ENCODE measurements at regions of chr1 and their contacts with region 1.

Region 1: GRCh38 chr1:246566128-246566812 is at the starts of genes CNST and TFB2M:
- DNase-seq: peak; percentile 89 to 98
- H3K4me3 ChIP-seq: peak within 1 kb of the TSS; percentile 90
- H3K27ac ChIP-seq: peak within 1 kb of the TSS; percentile 69
- H3K4me1 ChIP-seq: peaks cover 19% of the 10 kb centered on the region
- H3K27me3 ChIP-seq: no peaks in the 10 kb centered on the region
- CTCF ChIP-seq: no peak
- total RNA-seq, gene CNST: 9.1 and 13.1 TPM in 2 replicates
- total RNA-seq, gene TFB2M: 16.2 and 17.8 TPM in 2 replicates

Region 2: DNA sequence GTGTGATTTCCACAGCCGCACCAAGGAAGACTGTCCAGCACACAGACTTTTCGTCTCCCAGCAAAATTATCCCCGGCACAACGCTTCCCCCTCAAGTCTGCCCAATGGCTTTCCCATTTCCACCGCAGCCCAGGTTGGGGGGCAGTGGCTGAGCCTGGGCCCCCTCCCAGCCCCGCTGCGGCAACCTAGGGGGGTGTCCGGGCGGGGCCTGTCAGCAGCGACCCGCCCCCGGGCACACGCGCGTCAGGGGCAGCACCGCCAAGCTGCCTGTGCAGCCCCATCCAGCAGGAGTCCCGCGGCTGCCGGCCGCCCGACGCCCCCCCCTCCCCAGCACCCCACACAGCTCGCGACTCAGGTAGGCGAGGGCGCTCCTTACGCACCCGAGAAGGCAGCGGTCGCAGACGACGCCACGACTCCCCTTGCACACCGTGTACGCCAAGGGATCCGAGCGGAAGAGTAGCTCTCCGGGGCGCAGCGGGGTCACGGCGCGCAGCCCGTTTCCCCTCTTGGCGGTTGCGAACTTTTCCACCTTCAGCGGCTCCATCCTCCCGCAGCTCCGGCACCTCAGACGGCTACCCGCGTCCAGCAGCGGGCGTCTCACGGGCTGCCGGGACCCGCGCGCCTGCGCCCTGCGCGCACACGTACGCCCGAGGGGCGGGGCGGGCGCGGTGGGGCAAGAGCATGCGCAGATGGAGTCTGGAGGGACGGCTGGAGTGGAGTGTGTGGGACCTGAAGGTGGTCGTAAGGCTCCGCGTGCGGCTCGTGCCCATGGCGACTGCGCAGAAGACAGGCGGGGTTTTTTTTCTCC is 59.4 kb before region 1 on chr1 and contains the start of gene SMYD3:
- CTCF ChIA-PET with region 1: no interaction called
- POLR2A ChIA-PET with region 1: no interaction called
- intact Hi-C with region 1: loop called (anchors 1 kb)
- DNase-seq: peak; percentile 48 to 76
- H3K4me3 ChIP-seq: peak within 1 kb of the TSS; percentile 75
- H3K27ac ChIP-seq: no peak within 1 kb of the TSS
- H3K4me1 ChIP-seq: peaks cover 26% of the 10 kb centered on the region
- H3K27me3 ChIP-seq: no peaks in the 10 kb centered on the region
- CTCF ChIP-seq: no peak
- total RNA-seq, gene SMYD3: 28.2 and 29.6 TPM in 2 replicates

Region 3: DNA sequence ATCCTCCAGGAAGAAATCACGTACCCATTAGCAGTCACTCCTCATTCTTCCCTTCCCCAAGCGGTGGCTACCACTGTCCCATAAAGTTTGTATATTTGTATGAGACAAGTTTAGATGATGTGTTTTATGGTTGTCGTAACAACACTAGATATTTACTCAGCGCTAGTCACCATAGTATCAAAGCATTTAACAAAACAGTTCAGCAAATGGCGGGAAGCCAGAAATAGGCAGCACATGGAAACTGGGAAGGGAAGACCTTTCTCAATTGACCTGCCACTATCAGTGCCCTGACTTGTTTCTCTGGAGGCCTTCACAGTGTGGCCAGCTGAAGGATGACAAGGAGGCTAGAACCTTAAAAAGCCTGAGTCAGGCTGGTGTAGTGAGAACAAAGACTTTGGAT is 31.1 kb after region 1 on chr1:
- CTCF ChIA-PET with region 1: no interaction called
- POLR2A ChIA-PET with region 1: interaction called, 3 read pairs
- intact Hi-C with region 1: loop called (anchors 1 kb)
- DNase-seq: peak; percentile 36 to 58
- H3K4me3 ChIP-seq: no peak overlapping the region
- H3K27ac ChIP-seq: no peak overlapping the region
- H3K4me1 ChIP-seq: no peaks in the 10 kb centered on the region
- H3K27me3 ChIP-seq: no peaks in the 10 kb centered on the region
- CTCF ChIP-seq: no peak

Region 4: GRCh38 chr1:246608616-246609376 is 42.5 kb after region 1 on chr1:
- CTCF ChIA-PET with region 1: interaction called, 7 read pairs
- POLR2A ChIA-PET with region 1: no interaction called
- intact Hi-C with region 1: loop called (anchors 1 kb)
- DNase-seq: peak; percentile 91 to 96
- H3K4me3 ChIP-seq: no peak overlapping the region
- H3K27ac ChIP-seq: peak overlapping the region; percentile 81
- H3K4me1 ChIP-seq: peaks cover 15% of the 10 kb centered on the region
- H3K27me3 ChIP-seq: no peaks in the 10 kb centered on the region
- CTCF ChIP-seq: no peak

Region 5: DNA sequence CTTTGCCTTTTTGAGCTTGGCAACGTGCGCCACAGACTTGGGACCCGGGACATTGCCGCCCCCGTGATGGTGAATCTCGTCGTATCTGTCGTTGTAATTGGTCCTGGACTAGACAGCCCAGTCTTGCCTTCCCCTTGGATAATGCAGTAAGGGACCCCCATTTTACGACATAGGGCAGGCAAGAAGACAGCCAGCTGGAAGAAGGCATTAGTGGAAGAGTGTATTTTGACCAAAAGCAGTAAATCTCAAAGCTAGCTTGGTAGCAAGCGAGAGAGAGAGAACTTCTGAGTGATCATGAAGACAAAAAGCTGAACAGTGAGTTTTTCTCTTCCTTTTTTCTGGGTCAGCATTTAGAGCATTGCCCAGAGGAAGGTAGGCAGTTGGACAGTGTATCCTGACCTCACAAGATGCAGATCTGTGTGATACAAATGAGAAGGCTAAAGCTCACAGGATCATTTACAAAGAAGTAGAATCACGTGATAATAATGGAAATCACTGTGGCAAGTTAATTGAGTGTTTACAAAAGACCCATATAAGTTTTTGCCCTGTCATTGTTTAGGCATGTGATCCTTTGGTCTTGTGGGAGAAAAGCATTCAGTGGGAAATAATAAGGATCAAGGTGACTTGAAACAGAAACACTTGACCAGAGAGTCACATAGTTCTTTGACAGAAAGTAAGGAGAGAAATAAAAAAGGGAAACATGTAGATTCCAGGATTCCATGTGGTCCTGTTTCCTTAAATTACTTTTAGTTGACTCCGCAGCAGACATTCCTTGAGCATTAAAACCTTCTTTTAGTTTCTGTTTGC is 66.2 kb after region 1 on chr1:
- CTCF ChIA-PET with region 1: no interaction called
- POLR2A ChIA-PET with region 1: no interaction called
- intact Hi-C with region 1: loop called (anchors 1 kb)
- DNase-seq: peak in 1 of 2 experiments; percentile 89
- H3K4me3 ChIP-seq: peak overlapping the region; percentile 23; the same call in 1 of the 2 replicates
- H3K27ac ChIP-seq: peak overlapping the region; percentile 90
- H3K4me1 ChIP-seq: peaks cover 18% of the 10 kb centered on the region
- H3K27me3 ChIP-seq: no peaks in the 10 kb centered on the region
- CTCF ChIP-seq: no peak

Region 6: DNA sequence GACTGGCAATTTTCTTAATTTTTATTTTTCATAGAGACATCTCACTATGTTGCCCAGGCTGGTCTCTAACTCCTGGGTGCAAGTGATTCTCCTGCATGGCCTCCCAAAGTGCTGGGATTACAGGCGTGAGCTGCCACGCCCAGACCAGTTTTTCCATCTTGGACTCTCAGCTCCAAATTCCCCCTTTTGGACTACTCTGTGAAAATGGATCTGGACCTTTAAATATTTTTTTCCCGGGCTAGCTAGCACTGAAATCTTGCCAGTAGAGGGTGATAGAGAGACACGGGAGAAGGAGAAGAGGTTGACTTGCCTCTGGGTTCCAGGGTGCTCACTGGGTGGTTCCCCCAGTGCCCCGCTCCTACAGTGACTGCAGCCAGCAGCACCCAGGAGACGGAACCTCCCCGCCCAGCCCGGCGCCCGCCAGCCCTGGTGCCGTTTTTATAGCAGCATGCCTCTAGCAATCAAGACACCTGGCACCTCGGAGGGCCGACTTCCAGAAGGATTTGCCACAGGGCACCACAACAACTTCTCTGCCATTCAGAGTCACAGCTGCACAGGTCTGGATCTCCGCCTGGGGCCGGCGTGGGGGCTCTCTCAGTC is 123.2 kb after region 1 on chr1:
- CTCF ChIA-PET with region 1: no interaction called
- POLR2A ChIA-PET with region 1: no interaction called
- intact Hi-C with region 1: loop called (anchors 1 kb)
- DNase-seq: peak; percentile 61
- H3K4me3 ChIP-seq: peak overlapping the region; percentile 54; the same call in 1 of the 2 replicates
- H3K27ac ChIP-seq: no peak overlapping the region
- H3K4me1 ChIP-seq: 0 out of 2 replicates have a peak, but pooled peaks cover 3% of the 10 kb centered on the region
- H3K27me3 ChIP-seq: no peaks in the 10 kb centered on the region
- CTCF ChIP-seq: peak; percentile 79

Region 7: GRCh38 chr1:246753670-246754535 is 187.6 kb after region 1 on chr1:
- CTCF ChIA-PET with region 1: no interaction called
- POLR2A ChIA-PET with region 1: no interaction called
- intact Hi-C with region 1: loop called (anchors 10 kb)
- DNase-seq: peak in 1 of 2 experiments; percentile 54
- H3K4me3 ChIP-seq: no peak overlapping the region
- H3K27ac ChIP-seq: no peak overlapping the region
- H3K4me1 ChIP-seq: no peaks in the 10 kb centered on the region
- H3K27me3 ChIP-seq: no peaks in the 10 kb centered on the region
- CTCF ChIP-seq: peak; percentile 82